Activated T-helper 1 cell treated with anti-CD3 and anti-CD28 coated beads, Interleukin-12 subunit alpha, Interleukin-12 subunit beta, Interleukin-2, Interleukin-4 antibody, amounts not matched to agents 30 ng/mL and 10 ng/mL and 1 ng/mL, durations not matched to agents 14 hours and 24 hours and 36 hours (primary cell): ENCODE measurements at regions of chr3 and their contacts with region 1.

Region 1: DNA sequence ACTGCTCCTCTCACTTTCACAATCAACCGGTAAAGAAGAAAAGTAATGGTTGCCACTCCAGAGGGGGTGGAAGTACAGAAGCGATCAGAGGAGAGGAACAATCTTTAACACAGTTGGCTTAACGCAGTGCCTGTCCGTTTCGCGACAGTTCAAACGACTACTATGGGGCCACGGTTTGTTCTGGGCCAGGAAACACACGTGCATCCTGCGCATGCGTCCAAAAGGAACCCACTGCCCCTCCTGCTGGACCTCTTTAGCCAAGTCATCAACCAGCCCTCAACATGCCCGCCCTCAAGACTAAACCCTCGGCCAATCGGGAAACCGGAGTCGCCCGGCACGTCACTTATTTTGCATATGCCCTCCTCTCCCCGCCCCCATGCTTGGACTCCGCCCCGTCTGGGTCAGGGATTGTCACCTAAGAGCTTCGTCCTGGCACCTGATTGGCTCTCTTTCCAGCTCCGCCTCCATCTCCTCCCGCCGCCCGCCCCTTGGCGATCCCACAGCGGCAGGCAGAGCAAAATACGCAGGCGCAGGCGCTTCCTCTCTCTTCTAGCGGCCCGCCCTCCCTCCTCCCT is 345 bp upstream of the CDV3 start:
- DNase-seq: peak; percentile 100
- H3K4me3 Mint-ChIP-seq: peak overlapping the region; percentile 84
- H3K27ac Mint-ChIP-seq: peak overlapping the region; percentile 98
- H3K4me1 Mint-ChIP-seq: peaks cover 60% of the 10 kb centered on the region
- H3K27me3 Mint-ChIP-seq: peaks cover 2% of the 10 kb centered on the region

Region 2: GRCh38 chr3:132659365-132660051 is 913.6 kb before region 1 on chr3 and contains the start of gene ACAD11:
- intact Hi-C with region 1: loop called (anchors 1 kb)
- DNase-seq: peak; percentile 24
- H3K4me3 Mint-ChIP-seq: peak within 1 kb of the TSS; percentile 97
- H3K27ac Mint-ChIP-seq: peak within 1 kb of the TSS; percentile 98
- H3K4me1 Mint-ChIP-seq: peaks cover 44% of the 10 kb centered on the region
- H3K27me3 Mint-ChIP-seq: no peaks in the 10 kb centered on the region
- total RNA-seq, gene ACAD11: 14.1 and 14.3 TPM in 2 replicates

Region 3: DNA sequence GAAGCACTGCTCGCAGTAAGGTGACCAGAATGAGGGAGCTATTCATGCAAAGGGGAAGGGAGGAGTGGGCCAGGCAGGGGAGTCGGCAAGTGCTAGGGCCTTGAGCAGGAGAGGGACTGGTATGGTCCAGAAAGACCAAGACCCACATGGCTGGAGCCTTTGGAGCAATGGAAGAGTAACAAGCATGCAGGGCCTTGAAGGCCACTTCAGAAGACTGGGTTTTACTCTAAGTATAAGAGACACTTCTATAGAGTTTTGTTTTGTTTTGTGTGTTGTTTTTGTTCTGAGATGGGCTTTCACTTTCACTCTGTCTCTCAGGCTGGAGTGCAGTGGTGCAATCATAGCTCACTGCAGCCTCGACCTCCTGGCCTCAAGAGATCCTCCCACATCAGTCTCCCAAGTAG is 131.3 kb before region 1 on chr3:
- intact Hi-C with region 1: loop called (anchors 1 kb)
- DNase-seq: peak; percentile 22
- H3K4me3 Mint-ChIP-seq: peak overlapping the region; percentile 81
- H3K27ac Mint-ChIP-seq: peak overlapping the region; percentile 96
- H3K4me1 Mint-ChIP-seq: peaks cover 35% of the 10 kb centered on the region
- H3K27me3 Mint-ChIP-seq: no peaks in the 10 kb centered on the region

Region 4: DNA sequence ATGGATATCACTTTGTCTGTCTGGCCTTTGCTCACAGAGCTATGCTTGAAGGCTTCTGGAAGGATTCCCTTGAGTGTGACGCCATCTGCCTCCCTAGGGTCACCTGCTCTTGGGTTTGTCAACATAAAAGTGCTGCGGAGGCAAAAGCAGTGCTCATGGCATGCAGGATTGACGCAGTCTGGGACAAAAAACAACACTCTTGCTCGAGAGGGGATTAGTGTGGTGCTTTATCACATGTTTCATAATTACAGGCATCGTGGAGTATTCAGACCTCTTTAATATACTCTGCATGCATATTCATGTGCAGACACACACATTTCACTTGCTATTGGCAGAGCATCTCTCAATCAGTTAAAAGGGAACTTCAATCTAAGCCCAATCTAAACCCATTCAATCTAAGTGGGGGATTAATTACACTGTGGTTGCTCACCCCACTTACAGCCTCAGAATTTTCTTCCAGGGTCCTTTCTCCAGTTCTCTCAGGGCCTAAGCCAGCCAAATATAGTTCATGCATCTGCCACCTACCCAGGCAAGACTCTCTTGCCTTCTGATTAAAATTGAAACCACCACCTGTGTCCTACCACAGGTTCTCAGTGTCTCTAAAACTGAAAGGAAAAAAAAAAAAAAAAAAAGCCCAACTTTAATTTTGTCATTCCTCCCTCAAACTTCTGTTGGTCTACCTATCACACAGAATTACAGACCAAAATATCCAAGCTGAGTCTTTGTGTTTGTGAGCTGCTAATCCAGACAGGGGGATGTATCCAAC is 97.7 kb before region 1 on chr3:
- intact Hi-C with region 1: loop called (anchors 1 kb)
- DNase-seq: peak; percentile 42
- H3K4me3 Mint-ChIP-seq: peak overlapping the region; percentile 59
- H3K27ac Mint-ChIP-seq: peak overlapping the region; percentile 32
- H3K4me1 Mint-ChIP-seq: peaks cover 52% of the 10 kb centered on the region
- H3K27me3 Mint-ChIP-seq: no peaks in the 10 kb centered on the region

Region 5: DNA sequence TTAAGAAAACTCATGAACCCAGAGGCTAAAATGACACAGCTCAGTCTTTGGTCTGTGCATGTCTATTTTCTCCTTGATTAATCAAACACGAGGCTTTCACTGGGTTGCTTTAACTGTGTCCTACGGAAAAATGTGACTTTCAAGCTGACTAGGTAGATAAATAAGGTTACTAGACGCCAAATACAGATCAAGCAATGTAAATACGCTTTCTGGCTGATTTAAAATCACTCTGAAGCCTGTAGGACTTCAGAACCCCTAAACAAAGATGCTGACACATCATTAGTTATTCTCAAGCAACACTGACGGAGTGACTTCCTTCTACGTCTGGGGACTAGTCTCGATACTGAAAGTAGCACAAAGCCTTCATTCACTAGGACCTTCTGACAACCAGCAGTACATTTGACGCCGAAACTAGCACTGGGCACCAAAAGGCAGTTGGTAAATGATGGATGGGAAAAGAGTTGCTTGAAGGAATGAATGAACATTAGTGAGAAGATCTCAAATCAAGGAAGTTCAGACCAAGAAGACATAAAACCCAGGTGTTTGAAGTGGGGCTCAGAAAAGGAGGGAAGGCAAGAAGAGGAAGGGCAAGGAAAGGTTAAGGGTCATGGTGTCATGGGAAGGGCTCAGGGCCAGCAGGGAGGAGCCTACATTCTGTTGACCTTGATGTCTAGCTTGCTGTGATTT is 66.8 kb before region 1 on chr3:
- intact Hi-C with region 1: loop called (anchors 1 kb)
- DNase-seq: peak; percentile 37
- H3K4me3 Mint-ChIP-seq: peak overlapping the region; percentile 20
- H3K27ac Mint-ChIP-seq: peak overlapping the region; percentile 70
- H3K4me1 Mint-ChIP-seq: peaks cover 14% of the 10 kb centered on the region
- H3K27me3 Mint-ChIP-seq: no peaks in the 10 kb centered on the region

Region 6: DNA sequence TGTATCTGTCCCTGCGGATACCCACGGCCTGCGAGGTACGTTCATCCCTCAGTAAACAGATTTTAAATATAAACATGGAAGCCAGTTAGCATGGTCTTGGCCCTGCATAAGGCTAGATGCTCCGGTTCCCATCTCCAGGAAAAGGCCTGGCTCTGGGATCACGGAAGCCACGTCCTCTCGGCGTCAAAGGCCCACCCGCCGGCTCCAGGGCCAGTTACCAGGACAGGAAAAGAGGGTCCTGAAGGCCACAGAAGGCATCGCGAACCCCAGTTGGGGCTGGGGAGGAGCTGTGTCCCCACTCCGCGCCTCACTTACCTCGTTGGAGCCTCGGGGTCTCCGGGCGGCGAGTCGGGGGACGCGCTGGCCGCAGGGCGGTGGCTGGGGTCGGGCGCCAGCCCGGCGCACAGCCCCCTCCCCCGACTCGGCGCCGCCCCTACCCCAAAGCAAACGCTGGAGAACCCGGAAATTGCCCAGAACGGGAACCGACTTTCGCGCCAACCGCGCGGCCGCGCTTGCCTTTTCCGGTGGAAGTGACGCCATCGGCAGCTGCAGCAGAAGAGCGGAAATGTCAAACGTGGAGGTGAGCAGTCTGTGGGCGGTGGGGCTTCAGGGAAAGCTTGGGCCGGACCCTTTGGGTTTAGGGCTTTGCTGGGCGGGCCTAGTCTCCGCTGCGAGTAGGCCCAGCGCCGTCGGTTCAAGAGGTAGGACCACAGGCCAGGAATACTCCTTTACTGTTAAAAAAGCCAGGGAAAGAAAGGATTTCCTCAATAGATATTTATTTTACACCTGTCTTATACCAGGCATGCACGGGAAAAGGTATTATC is 88.5 kb after region 1 on chr3 and contains the start of gene TOPBP1:
- intact Hi-C with region 1: loop called (anchors 1 kb)
- DNase-seq: peak; percentile 90
- H3K4me3 Mint-ChIP-seq: peak within 1 kb of the TSS; percentile 99
- H3K27ac Mint-ChIP-seq: peak within 1 kb of the TSS; percentile 99
- H3K4me1 Mint-ChIP-seq: peaks cover 47% of the 10 kb centered on the region
- H3K27me3 Mint-ChIP-seq: peaks cover 2% of the 10 kb centered on the region
- total RNA-seq, gene TOPBP1: 88.5 and 94.1 TPM in 2 replicates

Region 7: DNA sequence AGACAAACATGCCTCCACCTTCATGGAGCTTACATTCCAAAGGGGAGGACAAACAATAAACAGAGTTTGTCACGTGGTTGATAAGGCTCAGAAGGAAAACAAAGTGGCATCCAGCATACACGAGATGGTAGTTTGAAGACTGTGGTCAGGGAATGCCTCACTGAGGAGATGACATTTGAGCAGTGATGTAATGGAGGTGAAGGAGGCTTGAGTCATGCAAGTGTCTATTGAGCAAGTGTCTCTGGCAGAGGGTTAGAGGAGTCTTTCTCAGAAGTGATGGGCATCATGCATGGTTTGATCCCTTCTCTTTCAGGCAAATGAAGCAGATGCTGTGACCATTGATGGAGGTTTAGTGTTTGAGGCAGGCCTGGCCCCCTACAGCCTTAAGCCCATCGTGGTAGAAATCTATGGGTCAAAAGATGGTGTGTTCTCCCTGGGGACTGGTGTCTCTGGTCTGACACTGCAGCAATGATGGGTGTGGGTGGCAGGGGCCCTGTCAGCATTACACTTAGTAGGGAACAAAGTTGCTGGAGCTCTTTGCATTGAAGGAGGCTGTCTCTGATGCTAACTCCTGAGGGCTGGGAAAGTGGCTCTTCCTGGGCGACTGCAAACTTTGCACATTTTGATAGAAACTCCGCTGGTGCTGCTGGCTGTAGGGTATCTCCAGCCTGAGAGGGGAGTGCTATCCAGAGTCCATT is 118.4 kb after region 1 on chr3:
- intact Hi-C with region 1: no loop called
- DNase-seq: no peak
- H3K4me3 Mint-ChIP-seq: no peak overlapping the region
- H3K27ac Mint-ChIP-seq: no peak overlapping the region
- H3K4me1 Mint-ChIP-seq: no peaks in the 10 kb centered on the region
- H3K27me3 Mint-ChIP-seq: no peaks in the 10 kb centered on the region

Region 8: GRCh38 chr3:134250717-134251220 is 677.6 kb after region 1 on chr3 and contains the start of gene RYK:
- intact Hi-C with region 1: loop called (anchors 5 kb)
- DNase-seq: peak; percentile 66
- H3K4me3 Mint-ChIP-seq: peak within 1 kb of the TSS; percentile 88
- H3K27ac Mint-ChIP-seq: peak within 1 kb of the TSS; percentile 89
- H3K4me1 Mint-ChIP-seq: peaks cover 35% of the 10 kb centered on the region
- H3K27me3 Mint-ChIP-seq: peaks cover 35% of the 10 kb centered on the region
- total RNA-seq, gene RYK: 15.8 and 16.8 TPM in 2 replicates

Region 9: DNA sequence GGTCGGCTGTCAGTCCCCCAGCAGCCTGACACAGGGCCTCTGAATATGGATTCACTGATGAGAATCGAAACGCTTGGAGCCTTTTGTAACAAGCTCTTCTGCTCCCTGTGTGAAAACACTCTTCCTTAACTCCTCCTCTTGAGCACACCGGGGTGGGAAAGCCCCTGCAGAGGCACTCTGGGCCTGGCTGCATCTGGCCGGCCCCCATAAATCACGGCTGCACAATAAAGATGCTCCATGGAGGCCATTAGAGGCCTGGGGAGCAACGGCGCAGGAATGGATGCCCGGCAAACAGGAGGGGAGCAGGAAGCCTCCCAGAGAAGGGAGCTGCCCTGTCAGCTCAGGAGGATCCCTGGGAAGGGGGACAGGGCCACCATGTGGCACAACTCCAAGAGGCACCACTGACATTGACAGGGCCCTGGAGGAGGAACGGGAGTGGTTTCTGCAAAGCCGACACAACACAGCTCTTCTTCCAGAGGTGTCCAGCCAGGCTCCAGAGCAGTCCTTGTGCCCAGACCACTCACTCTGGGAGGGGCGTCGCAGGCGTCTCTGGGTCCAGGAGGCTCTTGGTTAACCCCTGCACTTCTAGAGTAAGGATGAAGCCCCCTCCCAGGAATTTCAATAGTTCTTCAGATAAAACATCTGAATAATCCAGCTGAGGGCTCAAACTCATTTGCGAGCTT is 1883.1 kb after region 1 on chr3:
- intact Hi-C with region 1: no loop called
- DNase-seq: no peak
- H3K4me3 Mint-ChIP-seq: no peak overlapping the region
- H3K27ac Mint-ChIP-seq: no peak overlapping the region
- H3K4me1 Mint-ChIP-seq: no peaks in the 10 kb centered on the region
- H3K27me3 Mint-ChIP-seq: no peaks in the 10 kb centered on the region